ENCODE measurements at regions of chr1 and their contacts with region 1.

Region 1: DNA sequence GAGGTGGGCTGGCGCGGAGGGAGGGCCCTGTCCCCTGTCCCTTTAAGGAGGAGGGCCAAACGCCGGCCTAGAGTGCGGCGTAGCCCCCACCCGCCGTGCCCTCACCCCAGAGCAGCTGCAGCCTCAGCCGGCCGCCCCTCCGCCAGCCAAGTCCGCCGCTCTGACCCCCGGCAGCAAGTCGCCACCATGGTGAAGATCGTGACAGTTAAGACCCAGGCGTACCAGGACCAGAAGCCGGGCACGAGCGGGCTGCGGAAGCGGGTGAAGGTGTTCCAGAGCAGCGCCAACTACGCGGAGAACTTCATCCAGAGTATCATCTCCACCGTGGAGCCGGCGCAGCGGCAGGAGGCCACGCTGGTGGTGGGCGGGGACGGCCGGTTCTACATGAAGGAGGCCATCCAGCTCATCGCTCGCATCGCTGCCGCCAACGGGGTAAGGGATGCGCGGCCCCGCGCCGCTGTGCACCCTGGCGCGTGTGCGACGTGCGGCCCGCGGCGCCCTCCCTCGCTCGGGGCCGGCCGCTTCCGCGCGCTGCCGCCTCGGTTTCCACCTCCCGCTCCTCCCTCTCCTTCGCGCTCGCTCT is at the start of gene PGM1:
- DNase-seq: peak; percentile 77
- H3K4me3 Mint-ChIP-seq: peak within 1 kb of the TSS; percentile 96
- H3K27ac Mint-ChIP-seq: peak within 1 kb of the TSS; percentile 99
- H3K4me1 Mint-ChIP-seq: peaks cover 25% of the 10 kb centered on the region
- H3K27me3 Mint-ChIP-seq: no peaks in the 10 kb centered on the region
- total RNA-seq, gene PGM1: 25.3 to 27.5 TPM

Region 2: DNA sequence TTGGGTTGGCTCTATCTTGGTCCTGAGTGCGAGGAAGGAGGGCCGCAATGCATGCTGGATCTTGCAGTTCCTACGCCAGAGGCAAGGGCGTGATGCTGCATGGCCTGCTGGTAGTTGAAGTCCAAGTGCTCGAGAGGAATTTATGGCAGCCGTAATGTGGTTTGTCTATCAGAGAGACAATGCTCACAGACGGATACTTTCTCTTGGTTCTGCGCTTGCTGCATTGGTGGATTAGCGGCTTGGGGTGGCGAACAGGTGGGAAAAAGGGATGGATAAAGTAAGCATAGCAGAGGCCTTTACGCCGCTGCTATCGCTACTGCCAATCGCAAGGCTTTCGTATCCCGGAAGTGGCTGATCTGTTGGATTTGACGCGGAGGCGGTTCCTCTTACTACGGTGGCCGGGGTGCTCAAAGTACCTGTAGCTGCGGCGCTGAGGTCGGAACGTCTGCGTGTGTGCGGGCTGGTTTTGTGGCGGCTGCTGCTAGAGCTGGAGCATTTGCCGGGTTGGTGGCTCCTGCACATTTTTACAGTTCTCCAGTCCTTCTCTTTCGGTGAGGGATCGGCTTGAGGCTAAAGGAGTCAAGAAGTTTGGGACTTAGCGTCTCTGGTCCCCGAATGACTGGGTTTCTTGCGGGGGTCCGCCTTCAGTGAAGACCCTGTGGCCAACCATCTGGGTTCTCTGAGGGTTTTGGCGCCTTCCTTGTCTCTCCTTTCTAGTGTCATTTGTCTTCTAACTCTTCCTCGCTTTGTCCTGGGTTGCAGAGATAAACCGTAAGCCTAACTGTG is 809.5 kb before region 1 on chr1 and contains the start of gene ATG4C:
- CTCF ChIA-PET with region 1: no interaction called
- intact Hi-C with region 1: loop called (anchors 1 kb)
- DNase-seq: peak; percentile 96
- H3K4me3 Mint-ChIP-seq: no peak within 1 kb of the TSS
- H3K27ac Mint-ChIP-seq: no peak within 1 kb of the TSS
- H3K4me1 Mint-ChIP-seq: peaks cover 13% of the 10 kb centered on the region
- H3K27me3 Mint-ChIP-seq: peaks cover 7% of the 10 kb centered on the region
- total RNA-seq, gene ATG4C: 13.4 to 15.1 TPM

Region 3: DNA sequence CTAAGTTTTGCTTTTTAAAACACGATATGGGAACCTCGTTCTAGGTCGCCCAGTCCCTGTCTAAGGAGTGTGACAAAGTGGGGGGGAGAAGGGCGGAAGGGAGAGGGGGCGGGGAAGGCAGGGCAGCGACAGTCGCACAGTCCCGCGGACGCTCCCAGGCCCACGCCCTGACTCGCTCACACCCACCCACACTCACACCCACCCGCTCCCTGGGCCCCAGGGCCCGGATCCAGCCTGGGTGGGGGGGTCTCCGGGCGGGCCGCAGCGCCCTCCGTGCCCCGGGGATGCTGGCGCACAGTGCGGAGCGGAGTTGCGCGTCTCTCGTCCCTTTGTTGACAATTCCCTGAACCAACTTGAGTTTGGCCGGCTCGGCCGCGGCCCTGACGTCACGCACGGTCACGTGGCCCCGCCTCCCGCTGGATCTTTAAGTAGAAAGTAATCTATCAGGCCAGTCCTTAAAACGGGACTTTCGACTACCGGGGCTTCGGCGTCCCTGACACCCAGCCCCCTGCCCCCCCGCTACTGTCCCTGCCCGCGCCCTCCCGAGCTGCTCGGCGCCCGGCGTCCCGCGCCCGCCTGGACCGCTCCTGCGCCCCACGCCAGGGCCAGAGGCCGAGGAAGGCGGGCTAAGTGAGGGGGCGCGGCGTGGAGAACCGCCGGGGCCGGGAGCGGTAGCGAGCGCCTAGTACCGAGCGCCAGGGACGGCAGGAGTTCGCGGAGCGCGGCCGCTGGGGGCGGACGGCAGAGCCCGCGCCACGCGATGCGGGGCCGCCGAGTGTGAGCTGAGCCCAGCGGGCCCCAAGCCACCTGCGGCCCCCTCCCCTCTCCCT is 271.1 kb before region 1 on chr1 and contains the start of gene FOXD3:
- CTCF ChIA-PET with region 1: no interaction called
- intact Hi-C with region 1: loop called (anchors 2 kb)
- DNase-seq: peak; percentile 44
- H3K4me3 Mint-ChIP-seq: peak within 1 kb of the TSS; percentile 77
- H3K27ac Mint-ChIP-seq: peak within 1 kb of the TSS; percentile 54
- H3K4me1 Mint-ChIP-seq: peaks cover 44% of the 10 kb centered on the region
- H3K27me3 Mint-ChIP-seq: peaks cover 71% of the 10 kb centered on the region
- total RNA-seq, gene FOXD3: not detected

Region 4: DNA sequence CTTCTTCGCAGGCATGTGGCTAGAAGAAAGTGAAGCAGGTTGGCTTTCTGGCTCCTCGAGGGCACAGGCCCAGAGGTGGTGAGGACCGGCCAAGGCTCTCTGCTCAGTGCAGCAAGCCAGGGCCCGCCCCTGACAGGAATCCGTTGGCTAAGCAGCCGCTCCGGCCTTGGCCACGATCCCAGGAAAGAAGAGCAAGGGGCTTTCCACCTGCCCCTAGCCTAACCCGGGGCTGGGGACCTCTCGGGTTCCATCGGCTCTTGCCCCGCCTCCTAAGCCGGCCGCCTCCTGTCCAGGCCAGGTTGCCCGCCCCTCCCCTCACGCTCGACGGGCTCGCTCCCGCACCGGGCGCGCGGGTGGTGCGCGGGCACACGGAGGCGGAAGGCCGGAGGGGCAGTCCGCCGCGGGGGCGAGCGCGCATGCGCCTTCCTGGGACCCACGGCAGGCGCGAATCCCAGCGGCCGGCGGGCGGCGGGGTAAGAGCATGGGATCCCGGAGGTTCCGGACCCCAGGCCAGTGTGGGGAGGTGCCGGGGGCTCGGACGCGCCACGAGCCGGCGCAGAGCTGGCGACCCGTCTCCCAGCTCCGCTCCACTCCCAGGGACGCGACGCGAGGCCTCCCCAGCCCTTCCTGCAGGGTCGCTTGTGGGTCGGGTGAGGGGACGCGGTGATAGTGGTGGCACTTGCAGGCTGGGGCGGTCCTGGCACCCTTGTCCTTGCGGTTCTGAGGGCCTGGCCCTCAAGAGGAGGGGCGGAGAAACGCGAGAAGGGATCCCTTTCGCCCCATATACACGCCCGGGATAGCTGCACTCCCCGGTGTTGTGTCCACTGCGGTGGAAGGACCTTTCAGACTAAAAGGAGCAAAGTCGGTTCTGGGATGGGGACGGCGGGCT is 225.9 kb before region 1 on chr1 and contains the start of gene ALG6:
- CTCF ChIA-PET with region 1: no interaction called
- intact Hi-C with region 1: loop called (anchors 1 kb)
- DNase-seq: peak; percentile 91
- H3K4me3 Mint-ChIP-seq: peak within 1 kb of the TSS; percentile 83
- H3K27ac Mint-ChIP-seq: peak within 1 kb of the TSS; percentile 65
- H3K4me1 Mint-ChIP-seq: peaks cover 21% of the 10 kb centered on the region
- H3K27me3 Mint-ChIP-seq: peaks cover 3% of the 10 kb centered on the region
- total RNA-seq, gene ALG6: 11.0 to 13.5 TPM

Region 5: DNA sequence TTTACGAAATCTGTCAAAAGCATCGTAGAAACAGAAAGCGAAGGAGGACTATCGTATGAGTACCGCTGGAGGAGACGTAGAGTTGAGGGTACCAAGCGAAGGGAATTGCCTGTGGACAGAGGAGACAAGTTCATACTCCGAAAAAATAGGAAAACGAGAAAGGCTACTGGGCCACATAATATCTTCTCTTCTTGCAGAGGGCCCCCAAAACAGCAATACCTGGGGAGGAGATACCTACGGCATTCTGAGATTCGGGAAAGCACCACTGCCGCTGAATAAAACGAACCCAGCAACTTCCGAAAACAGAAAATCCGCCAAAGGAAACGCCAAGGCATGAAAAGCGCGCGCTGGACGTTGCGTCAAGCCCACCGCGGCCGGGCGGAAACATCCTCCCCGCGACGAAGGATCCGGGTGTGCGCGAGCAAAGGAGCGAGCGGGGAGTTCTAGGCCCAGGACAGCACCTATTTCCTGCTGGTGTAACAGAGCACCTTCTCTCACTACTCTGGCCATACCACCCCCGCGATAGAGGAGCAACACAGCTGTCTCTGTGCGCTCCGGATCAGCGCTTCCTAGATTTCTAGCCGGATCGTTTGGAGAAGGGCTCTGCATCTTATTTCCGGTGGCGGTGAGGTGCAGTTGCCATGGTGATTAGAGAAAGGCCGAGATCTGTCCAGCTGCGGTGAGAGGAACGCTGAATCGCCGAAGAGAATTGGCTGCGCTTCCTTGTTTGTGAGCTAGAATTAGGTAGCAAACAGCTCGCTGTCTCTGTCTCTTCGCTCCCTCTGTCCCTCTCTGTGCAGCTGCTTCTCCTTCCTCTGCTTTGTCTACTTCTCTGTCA is 70.3 kb before region 1 on chr1 and contains the starts of genes EFCAB7 and ITGB3BP:
- CTCF ChIA-PET with region 1: no interaction called
- intact Hi-C with region 1: loop called (anchors 1 kb)
- DNase-seq: peak; percentile 86
- H3K4me3 Mint-ChIP-seq: peak within 1 kb of the TSS; percentile 97
- H3K27ac Mint-ChIP-seq: peak within 1 kb of the TSS; percentile 95
- H3K4me1 Mint-ChIP-seq: peaks cover 24% of the 10 kb centered on the region
- H3K27me3 Mint-ChIP-seq: no peaks in the 10 kb centered on the region
- total RNA-seq, gene EFCAB7: 6.3 to 6.4 TPM
- total RNA-seq, gene ITGB3BP: 59.1 to 59.7 TPM

Region 6: DNA sequence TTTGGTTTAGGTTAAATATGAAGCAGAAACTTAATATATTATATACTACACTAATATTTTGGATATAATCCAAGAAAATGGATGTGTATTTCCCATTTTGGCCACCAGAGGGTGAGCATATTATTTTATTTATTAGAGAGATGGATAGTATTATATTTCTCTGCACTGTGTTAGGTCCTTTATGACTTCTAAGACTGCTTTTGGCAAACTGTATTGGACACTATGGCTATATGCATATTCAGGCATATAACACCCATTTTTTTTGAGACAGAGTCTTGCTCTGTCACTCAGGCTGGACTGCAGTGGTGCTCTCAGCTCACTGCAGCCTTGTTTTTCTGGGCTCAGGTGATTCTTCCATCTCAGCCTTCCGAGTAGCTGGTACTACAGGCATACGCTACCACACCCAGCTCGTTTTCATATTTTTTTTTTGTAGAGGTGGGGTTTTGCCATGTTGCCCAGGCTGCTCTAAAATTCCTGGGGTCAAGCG is 18.0 kb before region 1 on chr1:
- CTCF ChIA-PET with region 1: interaction called, 8 read pairs
- intact Hi-C with region 1: loop called (anchors 1 kb)
- DNase-seq: no peak
- H3K4me3 Mint-ChIP-seq: no peak overlapping the region
- H3K27ac Mint-ChIP-seq: no peak overlapping the region
- H3K4me1 Mint-ChIP-seq: no peaks in the 10 kb centered on the region
- H3K27me3 Mint-ChIP-seq: no peaks in the 10 kb centered on the region

Region 7: GRCh38 chr1:63615768-63616420 is 22.5 kb after region 1 on chr1:
- CTCF ChIA-PET with region 1: no interaction called
- intact Hi-C with region 1: loop called (anchors 1 kb)
- DNase-seq: peak; percentile 58
- H3K4me3 Mint-ChIP-seq: no peak overlapping the region
- H3K27ac Mint-ChIP-seq: no peak overlapping the region
- H3K4me1 Mint-ChIP-seq: peaks cover 4% of the 10 kb centered on the region
- H3K27me3 Mint-ChIP-seq: no peaks in the 10 kb centered on the region